WTC11 (cell line): ENCODE measurements at regions of chr2 and their contacts with region 1.

Region 1: DNA sequence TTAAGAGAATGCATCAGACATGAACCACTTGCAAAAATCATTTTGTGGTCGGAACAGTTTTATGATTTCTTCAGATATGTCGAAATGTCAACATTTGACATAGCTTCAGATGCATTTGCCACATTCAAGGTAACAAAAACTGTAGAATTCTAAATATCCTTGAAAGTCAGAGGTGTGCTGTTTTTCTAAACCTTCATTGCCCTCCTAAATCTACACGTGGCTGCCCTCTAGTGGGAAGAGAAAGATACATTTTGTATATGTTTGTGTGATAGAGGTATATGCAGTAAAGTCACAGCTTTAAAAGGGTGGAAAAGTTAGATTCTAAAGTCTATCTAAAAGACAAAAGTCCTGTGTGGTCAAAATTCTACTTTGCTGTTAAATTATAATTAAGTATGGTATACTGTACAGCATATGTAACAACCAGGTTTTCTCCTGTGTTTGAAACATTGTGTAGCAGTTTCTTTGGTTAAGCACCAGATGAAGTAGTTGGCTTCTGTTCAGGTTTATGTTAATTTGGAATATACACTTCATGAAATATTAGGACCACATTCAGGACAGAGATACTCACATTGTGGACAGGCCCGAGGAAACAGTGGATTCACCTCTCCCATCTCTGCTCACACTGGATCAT is 65.9 kb upstream of the ITM2C start:
- DNase-seq: no peak
- ATAC-seq: peak; percentile 63
- H3K4me3 Mint-ChIP-seq: no peak overlapping the region
- H3K27ac Mint-ChIP-seq: peak overlapping the region; percentile 42
- H3K4me1 Mint-ChIP-seq: peaks cover 14% of the 10 kb centered on the region
- H3K27me3 Mint-ChIP-seq: no peaks in the 10 kb centered on the region
- CTCF ChIP-seq: peak; percentile 27; the same call in 1 of the 2 replicates

Region 2: DNA sequence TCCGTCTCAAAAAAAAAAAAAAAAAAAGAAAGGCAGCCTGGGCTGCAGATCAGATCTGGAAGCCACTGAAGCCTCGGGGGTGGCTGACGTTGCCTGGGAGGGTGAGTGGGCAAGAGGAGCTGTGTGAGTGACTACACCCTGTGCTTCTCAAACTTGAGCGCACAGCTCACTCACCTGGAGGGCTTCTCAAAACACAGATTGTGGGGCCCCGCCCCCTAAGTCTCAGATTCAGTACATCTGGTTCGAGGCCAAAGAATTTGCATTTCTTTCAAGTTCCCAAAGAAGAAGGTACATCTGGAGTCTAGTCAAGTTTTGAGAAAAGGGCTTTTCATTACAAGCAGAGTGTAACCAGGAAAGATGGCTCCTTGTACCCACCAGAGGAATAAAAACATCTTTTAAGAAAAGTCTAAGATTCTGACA is 184.0 kb before region 1 on chr2:
- CTCF ChIA-PET with region 1: interaction called, 10 read pairs
- POLR2A ChIA-PET with region 1: no interaction called
- DNase-seq: no peak
- ATAC-seq: no peak
- H3K4me3 Mint-ChIP-seq: no peak overlapping the region
- H3K27ac Mint-ChIP-seq: no peak overlapping the region
- H3K4me1 Mint-ChIP-seq: 0 out of 2 replicates have a peak, but pooled peaks cover 5% of the 10 kb centered on the region
- H3K27me3 Mint-ChIP-seq: no peaks in the 10 kb centered on the region
- CTCF ChIP-seq: no peak

Region 3: DNA sequence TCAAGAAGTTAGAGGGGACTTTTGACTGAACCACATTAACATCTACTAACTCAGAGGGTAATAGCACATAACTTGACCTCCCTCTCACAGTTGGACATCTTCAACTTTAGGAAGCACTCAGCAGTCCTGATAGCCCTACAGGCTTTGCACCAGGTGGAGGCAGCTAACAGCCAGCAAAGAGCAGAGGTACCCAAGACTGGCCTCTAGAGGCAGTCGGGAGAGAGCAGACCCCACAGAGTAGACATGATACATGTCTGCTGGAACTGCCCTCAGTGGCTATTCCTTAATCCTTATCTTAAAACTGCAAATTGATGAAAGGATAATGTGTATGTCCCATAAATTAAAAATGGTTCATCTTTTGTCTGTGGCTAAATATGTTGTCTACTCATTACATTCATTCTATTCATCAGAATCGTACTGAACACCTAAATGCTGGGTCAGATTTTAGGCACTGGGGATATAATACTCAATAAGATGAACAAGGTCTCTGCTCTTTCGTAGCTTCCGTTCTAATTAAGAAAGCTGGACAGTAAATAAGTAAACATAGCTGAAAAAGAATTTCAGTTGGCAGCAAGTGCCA is 36.5 kb before region 1 on chr2:
- CTCF ChIA-PET with region 1: interaction called, 12 read pairs
- POLR2A ChIA-PET with region 1: no interaction called
- DNase-seq: peak; percentile 54
- ATAC-seq: peak; percentile 99
- H3K4me3 Mint-ChIP-seq: no peak overlapping the region
- H3K27ac Mint-ChIP-seq: peak overlapping the region; percentile 24; the same call in 1 of the 2 replicates
- H3K4me1 Mint-ChIP-seq: peaks cover 36% of the 10 kb centered on the region
- H3K27me3 Mint-ChIP-seq: no peaks in the 10 kb centered on the region
- CTCF ChIP-seq: no peak; the same call in 1 of the 2 replicates

Region 4: GRCh38 chr2:230814616-230815015 is 15.7 kb after region 1 on chr2:
- CTCF ChIA-PET with region 1: interaction called, 21 read pairs
- POLR2A ChIA-PET with region 1: no interaction called
- DNase-seq: no peak
- ATAC-seq: peak; percentile 78
- H3K4me3 Mint-ChIP-seq: no peak overlapping the region
- H3K27ac Mint-ChIP-seq: no peak overlapping the region
- H3K4me1 Mint-ChIP-seq: no peaks in the 10 kb centered on the region
- H3K27me3 Mint-ChIP-seq: no peaks in the 10 kb centered on the region
- CTCF ChIP-seq: no peak; the same call in 1 of the 2 replicates